Activated T-helper 2 cell treated with anti-CD3 and anti-CD28 coated beads, Interferon-gamma antibody, Interleukin-2, Interleukin-4, amounts not matched to agents 10 μg/mL and 5 μg/mL and 100 μg/mL, durations not matched to agents 14 hours and 24 hours and 36 hours (primary cell): ENCODE measurements at regions of chr6 and their contacts with region 1.

Region 1: GRCh38 chr6:39114704-39115599 is at the start of gene SAYSD1:
- DNase-seq: peak; percentile 93
- H3K4me3 Mint-ChIP-seq: peak within 1 kb of the TSS; percentile 93
- H3K27ac Mint-ChIP-seq: peak within 1 kb of the TSS; percentile 99
- H3K4me1 Mint-ChIP-seq: peaks cover 57% of the 10 kb centered on the region
- H3K27me3 Mint-ChIP-seq: no peaks in the 10 kb centered on the region
- total RNA-seq, gene SAYSD1: 16.9 and 17.1 TPM in 2 replicates

Region 2: DNA sequence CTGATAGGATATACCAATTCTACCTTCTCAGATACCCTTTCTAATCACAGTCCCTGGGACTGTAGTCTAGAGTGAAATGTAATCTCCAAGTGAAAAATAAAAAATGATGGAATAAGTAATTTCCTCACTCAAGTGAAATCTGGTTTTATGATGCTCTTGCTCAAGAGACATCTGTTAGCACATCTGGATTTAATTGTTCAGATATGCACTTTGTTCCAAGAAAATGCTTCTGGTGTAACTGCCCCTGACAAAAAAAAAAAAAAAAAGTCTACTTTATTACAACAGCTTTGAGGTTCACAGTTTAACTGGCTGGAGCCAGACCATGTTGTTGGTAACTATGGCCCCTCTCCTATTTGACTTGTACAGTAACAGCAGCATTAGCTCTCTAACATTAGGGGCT is 727.0 kb before region 1 on chr6:
- intact Hi-C with region 1: no loop called
- DNase-seq: no peak
- H3K4me3 Mint-ChIP-seq: no peak overlapping the region
- H3K27ac Mint-ChIP-seq: no peak overlapping the region
- H3K4me1 Mint-ChIP-seq: no peaks in the 10 kb centered on the region
- H3K27me3 Mint-ChIP-seq: no peaks in the 10 kb centered on the region

Region 3: GRCh38 chr6:38713812-38714211 is 401.1 kb before region 1 on chr6:
- intact Hi-C with region 1: loop called (anchors 10 kb)
- DNase-seq: peak; percentile 76
- H3K4me3 Mint-ChIP-seq: peak overlapping the region; percentile 56
- H3K27ac Mint-ChIP-seq: peak overlapping the region; percentile 87
- H3K4me1 Mint-ChIP-seq: peaks cover 44% of the 10 kb centered on the region
- H3K27me3 Mint-ChIP-seq: peaks cover 13% of the 10 kb centered on the region

Region 4: GRCh38 chr6:39029156-39030011 is 85.6 kb before region 1 on chr6:
- intact Hi-C with region 1: loop called (anchors 5 kb)
- DNase-seq: peak; percentile 35
- H3K4me3 Mint-ChIP-seq: no peak overlapping the region
- H3K27ac Mint-ChIP-seq: no peak overlapping the region
- H3K4me1 Mint-ChIP-seq: peaks cover 3% of the 10 kb centered on the region
- H3K27me3 Mint-ChIP-seq: peaks cover 55% of the 10 kb centered on the region

Region 5: DNA sequence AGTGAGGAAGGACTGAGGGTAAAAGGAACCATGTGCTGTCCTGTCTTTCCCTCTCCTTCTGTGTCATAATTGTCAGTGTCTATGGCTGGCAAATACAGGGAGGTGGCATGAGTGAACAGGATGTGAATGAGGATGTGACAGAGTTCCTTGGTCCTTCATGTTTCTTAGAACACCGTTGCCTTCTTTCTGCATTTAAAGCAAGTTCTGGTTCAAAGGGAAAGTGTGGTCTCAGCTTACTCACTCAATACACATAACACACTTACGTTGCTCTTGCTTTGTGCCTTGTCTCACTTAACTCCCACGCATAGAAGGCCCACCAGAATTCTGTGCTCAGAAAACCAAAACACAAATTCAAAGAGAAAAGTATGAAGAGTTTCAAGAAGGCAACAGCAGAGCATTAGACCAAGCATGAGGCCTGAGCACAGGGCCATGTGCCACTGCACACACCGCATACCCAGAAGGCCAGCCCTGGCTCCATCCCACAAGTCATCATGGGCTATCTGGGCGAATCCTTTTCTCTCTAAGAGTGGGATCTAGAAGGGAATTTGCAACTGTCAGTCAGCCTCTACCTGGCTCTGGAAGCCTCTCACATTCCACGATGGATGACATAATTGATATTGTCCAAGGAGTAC is 38.9 kb after region 1 on chr6:
- intact Hi-C with region 1: loop called (anchors 1 kb)
- DNase-seq: no peak
- H3K4me3 Mint-ChIP-seq: no peak overlapping the region
- H3K27ac Mint-ChIP-seq: peak overlapping the region; percentile 80
- H3K4me1 Mint-ChIP-seq: peaks cover 49% of the 10 kb centered on the region
- H3K27me3 Mint-ChIP-seq: no peaks in the 10 kb centered on the region

Region 6: GRCh38 chr6:39251406-39251805 is 136.5 kb after region 1 on chr6:
- intact Hi-C with region 1: no loop called
- DNase-seq: no peak
- H3K4me3 Mint-ChIP-seq: no peak overlapping the region
- H3K27ac Mint-ChIP-seq: no peak overlapping the region
- H3K4me1 Mint-ChIP-seq: peaks cover 6% of the 10 kb centered on the region
- H3K27me3 Mint-ChIP-seq: peaks cover 24% of the 10 kb centered on the region

Region 7: GRCh38 chr6:41072676-41073623 is 1958.0 kb after region 1 on chr6 and contains the start of gene NFYA:
- intact Hi-C with region 1: loop called (anchors 10 kb)
- DNase-seq: peak; percentile 100
- H3K4me3 Mint-ChIP-seq: peak within 1 kb of the TSS; percentile 98
- H3K27ac Mint-ChIP-seq: peak within 1 kb of the TSS; percentile 99
- H3K4me1 Mint-ChIP-seq: peaks cover 56% of the 10 kb centered on the region
- H3K27me3 Mint-ChIP-seq: no peaks in the 10 kb centered on the region
- total RNA-seq, gene NFYA: 28.1 and 28.2 TPM in 2 replicates